A549 (cell line): ENCODE measurements at regions of chr10 and their contacts with region 1.

Region 1: DNA sequence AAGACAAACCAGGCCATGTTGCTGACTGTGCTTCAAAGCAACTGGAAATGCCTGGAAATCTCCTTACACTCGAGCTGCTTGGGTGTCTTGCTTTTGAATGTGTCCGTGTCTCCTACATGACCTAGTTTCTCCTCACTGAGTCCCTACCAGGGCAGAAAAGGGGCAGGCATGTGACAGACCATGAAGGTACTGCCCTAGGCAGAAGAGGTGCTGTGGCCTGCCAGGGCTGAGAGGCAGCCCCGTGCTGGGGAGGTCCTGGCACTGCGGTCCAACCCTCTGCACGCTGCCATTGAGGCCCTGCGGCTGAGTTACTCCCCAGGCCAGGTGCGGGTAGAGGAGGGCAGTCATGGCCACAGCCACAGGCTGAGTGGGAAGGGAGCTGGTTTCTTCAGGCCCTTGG is 159.3 kb downstream of the LYZL1 start:
- DNase-seq: no peak
- ATAC-seq: no peak
- H3K4me3 ChIP-seq: no peak overlapping the region
- H3K27ac ChIP-seq: no peak overlapping the region
- H3K4me1 ChIP-seq: 0 out of 3 replicates have a peak, but pooled peaks cover 5% of the 10 kb centered on the region
- CTCF ChIP-seq: no peak
- EP300 ChIP-seq: no peak
- POLR2A ChIP-seq: no peak
- RAD21 ChIP-seq: no peak

Region 2: GRCh38 chr10:28628184-28628893 is 819.8 kb before region 1 on chr10:
- CTCF ChIA-PET with region 1: interaction called, 13 read pairs
- POLR2A ChIA-PET with region 1: no interaction called
- DNase-seq: peak; percentile 80 to 84
- ATAC-seq: peak; percentile 89 to 92
- H3K4me3 ChIP-seq: no peak overlapping the region
- H3K27ac ChIP-seq: peak overlapping the region; percentile 26 to 55; a peak in 5 of 6 replicates
- H3K4me1 ChIP-seq: peaks cover 19% of the 10 kb centered on the region
- CTCF ChIP-seq: peak; percentile 96
- EP300 ChIP-seq: no peak
- POLR2A ChIP-seq: no peak
- RAD21 ChIP-seq: peak; percentile 92 to 97

Region 3: GRCh38 chr10:29257106-29257783 is 190.9 kb before region 1 on chr10:
- CTCF ChIA-PET with region 1: no interaction called
- POLR2A ChIA-PET with region 1: no interaction called
- DNase-seq: peak in 1 of 2 experiments; percentile 33
- ATAC-seq: peak; percentile 69 to 73; a peak in 5 of 6 replicates
- H3K4me3 ChIP-seq: no peak overlapping the region
- H3K27ac ChIP-seq: peak overlapping the region in 1 of 2 experiments; percentile 58; a peak in 2 of 6 replicates
- H3K4me1 ChIP-seq: peaks cover 28% of the 10 kb centered on the region
- CTCF ChIP-seq: no peak
- EP300 ChIP-seq: no peak
- POLR2A ChIP-seq: no peak
- RAD21 ChIP-seq: no peak; a peak in 1 of 5 replicates

Region 4: GRCh38 chr10:29430101-29430500 is 18.0 kb before region 1 on chr10:
- CTCF ChIA-PET with region 1: interaction called, 17 read pairs
- POLR2A ChIA-PET with region 1: no interaction called
- DNase-seq: no peak
- ATAC-seq: no peak
- H3K4me3 ChIP-seq: no peak overlapping the region
- H3K27ac ChIP-seq: no peak overlapping the region
- H3K4me1 ChIP-seq: peaks cover 5% of the 10 kb centered on the region; the same call in 1 of the 3 replicates
- CTCF ChIP-seq: no peak
- EP300 ChIP-seq: no peak
- POLR2A ChIP-seq: no peak
- RAD21 ChIP-seq: no peak

Region 5: DNA sequence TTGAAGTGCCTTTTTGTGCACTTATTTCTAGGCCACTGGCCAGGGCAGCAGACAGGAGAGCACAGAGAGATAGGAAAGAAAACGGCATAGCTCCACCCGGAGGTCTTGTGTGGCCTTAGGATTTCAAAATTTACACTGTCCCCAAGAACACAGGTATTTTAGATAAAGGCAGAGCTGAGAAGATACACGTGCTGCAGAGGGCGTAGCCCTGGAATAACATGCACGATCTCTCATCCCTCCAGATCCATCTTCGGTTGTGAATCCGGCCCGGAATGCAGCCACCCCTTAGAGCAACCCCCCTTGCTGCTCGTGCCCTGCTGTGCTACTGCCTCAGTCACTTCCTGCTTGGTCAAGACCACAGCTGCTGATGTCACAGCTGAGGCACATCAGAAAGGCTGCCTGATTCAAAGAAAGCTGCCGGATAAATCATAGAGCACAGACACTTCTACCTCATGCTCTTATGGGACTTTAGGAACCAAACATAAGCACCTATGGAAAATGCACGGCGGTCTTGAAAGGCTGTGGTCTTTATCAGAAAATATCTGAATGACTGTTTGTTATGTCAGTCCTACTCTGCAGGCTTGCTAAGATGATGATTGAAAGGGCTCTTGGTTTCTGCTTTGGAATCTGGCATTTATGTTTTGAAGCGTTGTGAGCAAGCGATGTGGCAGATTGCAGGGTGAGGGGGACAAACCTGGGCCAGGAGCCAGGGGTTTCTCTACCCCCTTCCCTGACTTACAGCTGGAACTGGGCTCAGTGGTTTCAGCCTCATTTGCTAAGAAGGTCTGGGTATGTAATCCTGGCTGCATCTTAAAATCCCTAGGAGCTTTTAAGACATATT is 34.7 kb after region 1 on chr10:
- CTCF ChIA-PET with region 1: interaction called, 17 read pairs
- POLR2A ChIA-PET with region 1: no interaction called
- DNase-seq: no peak
- ATAC-seq: peak; percentile 38 to 41; a peak in 3 of 6 replicates
- H3K4me3 ChIP-seq: no peak overlapping the region
- H3K27ac ChIP-seq: no peak overlapping the region
- H3K4me1 ChIP-seq: no peaks in the 10 kb centered on the region
- CTCF ChIP-seq: no peak
- EP300 ChIP-seq: no peak
- POLR2A ChIP-seq: no peak
- RAD21 ChIP-seq: 0 out of 5 replicates have a peak, but pooled peaks of 1 of the 2 experiments have one; percentile 8